ENCODE measurements at regions of chr22 and their contacts with region 1.

Region 1: GRCh38 chr22:40950962-40951794 is at the start of gene RBX1:
- DNase-seq: peak; percentile 99 to 100 (median 99)
- H3K4me3 ChIP-seq: peak within 1 kb of the TSS; percentile 86 to 92
- H3K4me3 Mint-ChIP-seq: peak within 1 kb of the TSS; percentile 96 to 100 (median 99)
- H3K27ac ChIP-seq: peak within 1 kb of the TSS; percentile 98
- H3K27ac Mint-ChIP-seq: peak within 1 kb of the TSS; percentile 97 to 100 (median 100)
- H3K4me1 ChIP-seq: peaks cover 33% of the 10 kb centered on the region
- H3K4me1 Mint-ChIP-seq: peaks cover 17 to 36% (median 30%) of the 10 kb centered on the region in 4 donors
- H3K27me3 ChIP-seq: no peaks in the 10 kb centered on the region
- H3K27me3 Mint-ChIP-seq: peaks cover 0 to 5% of the 10 kb centered on the region in 2 donors
- total RNA-seq, gene RBX1: 39.6 to 46.4 TPM

Region 2: GRCh38 chr22:40856513-40857308 is 94.5 kb before region 1 on chr22 and contains the starts of genes ST13 and XPNPEP3:
- CTCF ChIA-PET with region 1: no interaction called
- POLR2A ChIA-PET with region 1: interaction called, 14 read pairs
- intact Hi-C with region 1: loop called (anchors 1 kb)
- DNase-seq: peak; percentile 97 to 98 (median 98)
- H3K4me3 ChIP-seq: peak within 1 kb of the TSS; percentile 72 to 100
- H3K4me3 Mint-ChIP-seq: peak within 1 kb of the TSS; percentile 96 to 99 (median 98)
- H3K27ac ChIP-seq: peak within 1 kb of the TSS; percentile 99
- H3K27ac Mint-ChIP-seq: peak within 1 kb of the TSS; percentile 98 to 100 (median 100)
- H3K4me1 ChIP-seq: peaks cover 53% of the 10 kb centered on the region
- H3K4me1 Mint-ChIP-seq: peaks cover 23 to 66% (median 45%) of the 10 kb centered on the region in 4 donors
- H3K27me3 ChIP-seq: no peaks in the 10 kb centered on the region
- H3K27me3 Mint-ChIP-seq: peaks cover 0 to 2% of the 10 kb centered on the region in 2 donors
- total RNA-seq, gene ST13: 161 to 168 TPM
- total RNA-seq, gene XPNPEP3: 18.6 to 20.0 TPM

Region 3: DNA sequence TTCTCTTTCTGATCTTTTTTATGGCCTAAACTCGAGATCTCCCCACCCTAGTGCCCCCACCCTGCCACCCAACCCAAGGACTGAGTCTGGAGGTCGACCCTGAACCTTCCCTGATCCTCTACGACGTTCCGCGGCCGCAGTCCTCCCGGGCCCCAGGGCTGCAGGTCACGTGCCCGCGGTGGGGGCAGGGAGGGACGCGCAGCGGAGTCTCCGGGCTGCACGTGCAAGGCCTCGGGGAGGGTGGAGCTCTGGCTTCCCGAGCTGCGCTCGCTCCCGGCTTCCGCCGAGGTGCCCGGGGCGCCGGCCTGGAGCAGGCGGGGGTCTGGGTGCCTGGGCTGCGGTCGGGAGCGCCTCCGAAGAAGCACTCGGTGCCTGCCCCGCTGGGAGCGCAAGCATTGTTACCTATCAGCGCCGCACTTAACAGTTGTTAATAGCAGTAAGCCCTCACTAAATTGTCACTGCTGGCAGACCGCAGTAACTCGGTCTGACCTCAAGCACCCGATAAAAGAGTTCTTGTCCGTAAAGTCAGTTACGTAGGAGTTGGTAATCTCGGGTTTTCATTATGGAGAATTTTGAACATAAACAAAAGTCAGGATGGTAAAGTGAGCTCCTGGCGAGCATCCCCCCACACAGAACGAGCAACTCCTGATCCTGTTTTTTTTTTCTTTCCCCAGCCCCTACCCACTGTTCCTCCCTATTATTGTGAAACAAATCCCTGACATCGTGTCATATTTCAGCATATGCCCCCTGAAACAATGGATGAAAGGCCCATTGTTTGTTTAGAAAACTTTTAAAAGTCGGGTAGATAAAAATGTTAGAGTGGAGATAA is 71.5 kb after region 1 on chr22:
- CTCF ChIA-PET with region 1: no interaction called
- POLR2A ChIA-PET with region 1: interaction called, 87 read pairs
- intact Hi-C with region 1: loop called (anchors 1 kb)
- DNase-seq: peak; percentile 72 to 82 (median 78)
- H3K4me3 ChIP-seq: peak overlapping the region in 1 of 2 donors; percentile 59
- H3K4me3 Mint-ChIP-seq: peak overlapping the region; percentile 70 to 88 (median 78)
- H3K27ac ChIP-seq: peak overlapping the region; percentile 70
- H3K27ac Mint-ChIP-seq: peak overlapping the region; percentile 38 to 92 (median 89)
- H3K4me1 ChIP-seq: peaks cover 18% of the 10 kb centered on the region
- H3K4me1 Mint-ChIP-seq: peaks cover 8 to 32% (median 15%) of the 10 kb centered on the region in 4 donors
- H3K27me3 ChIP-seq: no peaks in the 10 kb centered on the region
- H3K27me3 Mint-ChIP-seq: no peaks in the 10 kb centered on the region

Region 4: DNA sequence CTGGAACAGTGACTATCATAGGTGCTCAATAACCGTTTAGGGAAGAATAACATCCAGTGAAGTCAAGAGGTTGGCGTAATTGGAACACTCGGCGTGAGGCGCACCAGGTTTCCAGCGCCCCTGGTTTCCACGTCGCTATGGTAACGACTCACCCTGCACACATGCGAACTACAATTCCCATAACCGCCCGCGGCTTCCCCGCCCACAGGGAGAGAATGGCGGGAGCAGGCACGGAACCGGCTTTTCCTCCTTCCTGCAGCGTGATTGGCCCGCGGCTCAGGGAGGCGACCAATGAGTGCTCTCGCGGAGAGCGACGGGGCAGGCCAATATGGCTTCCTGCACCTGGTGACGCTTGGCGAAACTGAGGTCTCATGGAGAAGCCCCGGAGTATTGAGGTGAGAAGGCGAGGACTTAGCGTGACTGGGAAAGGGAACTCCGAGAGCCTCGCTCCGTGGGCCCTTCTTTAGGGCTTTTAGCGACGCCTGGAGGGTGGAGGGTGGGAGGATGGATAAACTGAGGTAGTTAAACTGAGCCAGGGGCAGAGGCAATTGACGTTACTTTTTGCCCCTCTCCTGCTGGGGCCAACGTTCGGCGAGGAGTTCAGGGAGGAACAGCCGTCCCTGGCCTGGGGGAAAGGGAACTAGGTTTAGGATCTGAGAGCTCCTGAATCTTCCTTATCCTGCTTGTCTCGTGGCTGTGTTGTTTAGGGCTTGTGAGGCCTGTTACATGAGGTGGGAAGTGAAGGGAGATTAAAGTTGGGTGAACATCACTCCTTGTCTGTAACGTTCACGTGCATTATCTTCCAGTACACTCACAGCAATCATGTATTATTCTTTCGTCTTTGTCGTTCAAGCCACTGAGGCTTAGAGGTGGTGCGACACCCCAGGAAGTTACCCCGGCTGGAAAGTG is 254.1 kb after region 1 on chr22 and contains the start of gene L3MBTL2:
- CTCF ChIA-PET with region 1: no interaction called
- POLR2A ChIA-PET with region 1: no interaction called
- intact Hi-C with region 1: loop called (anchors 5 kb)
- DNase-seq: peak; percentile 97 to 99 (median 98)
- H3K4me3 ChIP-seq: peak within 1 kb of the TSS; percentile 73 to 95
- H3K4me3 Mint-ChIP-seq: peak within 1 kb of the TSS; percentile 93 to 99 (median 96)
- H3K27ac ChIP-seq: peak within 1 kb of the TSS; percentile 85
- H3K27ac Mint-ChIP-seq: peak within 1 kb of the TSS; percentile 84 to 97 (median 93)
- H3K4me1 ChIP-seq: peaks cover 18% of the 10 kb centered on the region
- H3K4me1 Mint-ChIP-seq: peaks cover 15 to 40% (median 23%) of the 10 kb centered on the region in 4 donors
- H3K27me3 ChIP-seq: no peaks in the 10 kb centered on the region
- H3K27me3 Mint-ChIP-seq: peaks cover 3 to 6% of the 10 kb centered on the region in 2 donors
- total RNA-seq, gene L3MBTL2: 42.7 to 48.2 TPM

Region 5: GRCh38 chr22:41381329-41382097 is 430.3 kb after region 1 on chr22 and contains the start of gene TEF:
- CTCF ChIA-PET with region 1: no interaction called
- POLR2A ChIA-PET with region 1: interaction called, 10 read pairs
- intact Hi-C with region 1: no loop called
- DNase-seq: peak; percentile 99
- H3K4me3 ChIP-seq: peak within 1 kb of the TSS; percentile 65 to 88
- H3K4me3 Mint-ChIP-seq: peak within 1 kb of the TSS; percentile 90 to 97 (median 94)
- H3K27ac ChIP-seq: peak within 1 kb of the TSS; percentile 87
- H3K27ac Mint-ChIP-seq: peak within 1 kb of the TSS; percentile 98 to 99 (median 98)
- H3K4me1 ChIP-seq: peaks cover 18% of the 10 kb centered on the region
- H3K4me1 Mint-ChIP-seq: peaks cover 12 to 36% (median 22%) of the 10 kb centered on the region in 4 donors
- H3K27me3 ChIP-seq: no peaks in the 10 kb centered on the region
- H3K27me3 Mint-ChIP-seq: no peaks in the 10 kb centered on the region
- total RNA-seq, gene TEF: 6.5 to 8.8 TPM

Region 6: DNA sequence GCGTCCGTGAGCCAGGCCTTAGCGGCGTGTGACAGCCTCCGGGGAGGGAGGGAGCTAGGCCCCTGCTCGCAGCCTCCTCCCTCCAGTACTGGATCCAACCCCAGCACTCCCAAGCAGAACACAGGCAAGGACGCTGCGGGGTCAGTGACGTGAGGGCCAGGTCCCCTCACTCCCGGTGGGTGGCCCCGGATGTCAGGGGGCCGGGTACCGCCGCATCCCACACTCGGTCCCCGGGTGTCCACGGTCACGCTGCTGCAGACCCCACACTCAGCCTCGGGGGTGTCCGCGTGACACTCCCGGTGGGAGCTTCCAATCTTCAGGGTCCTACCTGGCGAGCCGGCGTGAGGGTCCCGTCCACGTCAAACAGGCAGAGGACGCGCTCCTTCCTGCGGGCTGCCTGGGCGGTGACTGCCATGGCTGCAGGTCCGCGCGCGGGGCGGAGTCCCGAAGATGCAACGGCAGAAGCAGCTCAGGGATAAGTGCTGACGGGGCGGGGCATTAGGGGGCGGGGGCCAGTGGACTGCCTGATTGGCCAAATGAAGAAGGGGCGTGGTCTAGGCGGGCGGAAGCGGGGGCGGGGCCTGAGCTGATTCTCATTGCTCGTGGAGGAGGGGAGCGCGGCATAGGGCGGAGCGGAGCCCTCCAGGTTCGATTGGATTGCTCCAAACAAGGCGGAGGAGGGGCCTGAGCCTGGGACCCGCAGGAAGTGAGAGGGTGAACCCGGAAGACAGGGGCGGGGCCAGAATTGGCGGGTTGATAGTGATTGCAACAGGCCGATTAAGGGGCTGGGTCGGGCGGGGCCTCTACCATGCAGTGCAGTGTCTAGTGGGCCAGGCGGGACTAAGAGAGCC is 638.4 kb after region 1 on chr22 and contains the start of gene PMM1:
- CTCF ChIA-PET with region 1: no interaction called
- POLR2A ChIA-PET with region 1: interaction called, 10 read pairs
- intact Hi-C with region 1: no loop called
- DNase-seq: peak; percentile 100
- H3K4me3 ChIP-seq: peak within 1 kb of the TSS; percentile 84 to 89
- H3K4me3 Mint-ChIP-seq: peak within 1 kb of the TSS; percentile 92 to 97 (median 94)
- H3K27ac ChIP-seq: peak within 1 kb of the TSS; percentile 60
- H3K27ac Mint-ChIP-seq: peak within 1 kb of the TSS; percentile 38 to 94 (median 90)
- H3K4me1 ChIP-seq: peaks cover 10% of the 10 kb centered on the region
- H3K4me1 Mint-ChIP-seq: peaks cover 5 to 27% (median 17%) of the 10 kb centered on the region in 4 donors
- H3K27me3 ChIP-seq: no peaks in the 10 kb centered on the region
- H3K27me3 Mint-ChIP-seq: no peaks in the 10 kb centered on the region
- total RNA-seq, gene PMM1: 31.7 to 32.9 TPM

Measured in CD4-positive, alpha-beta memory T cell (primary cell).